ENCODE measurements at regions of chr16 and their contacts with region 1.

Region 1: DNA sequence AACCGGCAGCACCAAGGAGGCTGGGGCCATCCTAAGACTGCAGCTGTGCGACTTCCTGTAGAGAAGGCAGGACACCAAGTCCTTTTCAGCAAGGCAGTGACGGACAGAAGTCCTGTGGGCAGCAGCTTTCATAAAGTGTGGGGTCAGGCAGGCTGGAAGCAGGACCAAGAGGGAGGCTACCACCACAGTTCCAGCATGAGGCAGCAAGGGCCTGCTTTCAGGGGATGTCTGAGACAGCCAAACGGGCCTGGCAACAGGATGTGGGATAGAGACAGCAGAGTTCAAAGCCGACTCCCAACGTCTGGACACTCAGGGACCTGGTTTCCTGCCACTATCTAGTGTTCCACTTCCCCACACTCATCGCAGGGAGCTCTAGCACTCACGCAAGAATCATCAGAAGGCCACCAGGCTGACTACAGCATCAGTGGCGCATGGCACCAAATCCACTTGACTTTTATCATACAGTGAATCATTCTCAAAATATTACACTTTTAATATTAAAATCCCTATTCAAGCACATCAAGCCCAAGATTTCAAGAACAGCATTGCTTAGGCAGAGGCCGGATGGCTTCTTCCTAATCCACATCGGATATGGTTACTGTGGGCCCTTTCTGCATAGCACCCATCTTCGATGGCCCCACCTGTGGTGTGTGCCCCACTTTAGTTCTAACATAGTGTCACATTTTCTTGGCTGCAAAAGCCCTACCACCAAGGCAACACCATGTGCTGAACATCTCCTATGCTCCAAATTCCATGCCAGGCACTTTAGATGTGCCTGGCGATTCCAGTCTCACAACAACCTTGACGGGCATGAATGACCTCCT is 5.2 kb downstream of the USP7 start:
- DNase-seq: no peak
- ATAC-seq: peak; percentile 7
- H3K4me3 Mint-ChIP-seq: peak overlapping the region; percentile 15; the same call in 1 of the 2 replicates
- H3K27ac Mint-ChIP-seq: peak overlapping the region; percentile 69
- H3K4me1 Mint-ChIP-seq: peaks cover 76% of the 10 kb centered on the region
- H3K27me3 Mint-ChIP-seq: no peaks in the 10 kb centered on the region
- CTCF ChIP-seq: no peak

Region 2: DNA sequence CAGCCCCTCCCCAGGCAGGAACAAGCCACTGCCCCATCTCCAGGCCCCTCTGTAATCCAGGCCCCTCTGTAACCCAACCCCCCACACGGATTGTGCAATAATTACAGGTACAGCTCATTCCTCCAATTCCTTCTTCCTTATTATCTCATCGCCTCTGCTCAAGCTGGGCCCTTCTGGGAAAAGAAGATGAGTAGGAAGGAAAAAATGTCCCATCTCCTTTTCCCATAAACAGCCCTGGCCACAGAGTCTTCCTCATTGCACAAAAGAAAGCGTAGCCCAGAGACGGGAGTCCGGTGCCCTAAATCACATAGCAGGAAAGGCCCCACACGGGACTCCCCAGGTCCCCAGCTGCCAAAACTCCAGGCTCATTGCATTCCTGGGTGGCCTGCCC is 80.0 kb before region 1 on chr16:
- CTCF ChIA-PET with region 1: no interaction called
- POLR2A ChIA-PET with region 1: no interaction called
- DNase-seq: no peak
- ATAC-seq: no peak
- H3K4me3 Mint-ChIP-seq: no peak overlapping the region
- H3K27ac Mint-ChIP-seq: 0 out of 2 replicates have a peak overlapping the region, but pooled peaks have one; percentile 93
- H3K4me1 Mint-ChIP-seq: peaks cover 13% of the 10 kb centered on the region
- H3K27me3 Mint-ChIP-seq: no peaks in the 10 kb centered on the region
- CTCF ChIP-seq: no peak

Region 3: GRCh38 chr16:8998114-8998513 is 39.6 kb after region 1 on chr16:
- CTCF ChIA-PET with region 1: no interaction called
- POLR2A ChIA-PET with region 1: interaction called, 10 read pairs
- DNase-seq: no peak
- ATAC-seq: no peak
- H3K4me3 Mint-ChIP-seq: no peak overlapping the region
- H3K27ac Mint-ChIP-seq: no peak overlapping the region
- H3K4me1 Mint-ChIP-seq: peaks cover 5% of the 10 kb centered on the region; the same call in 1 of the 2 replicates
- H3K27me3 Mint-ChIP-seq: no peaks in the 10 kb centered on the region; the same call in 1 of the 2 replicates
- CTCF ChIP-seq: no peak